Caco-2 (cell line): ENCODE measurements at regions of chr2 and their contacts with region 1.

Region 1: GRCh38 chr2:205216580-205216979 is 465.7 kb upstream of the NRP2 start:
- DNase-seq: peak; percentile 46 to 56
- H3K4me3 ChIP-seq: no peak overlapping the region
- H3K4me3 Mint-ChIP-seq: no peak overlapping the region
- H3K27ac Mint-ChIP-seq: peak overlapping the region; percentile 78
- H3K4me1 ChIP-seq: peaks cover 57% of the 10 kb centered on the region
- H3K4me1 Mint-ChIP-seq: peaks cover 46% of the 10 kb centered on the region
- H3K27me3 ChIP-seq: no peaks in the 10 kb centered on the region
- H3K27me3 Mint-ChIP-seq: no peaks in the 10 kb centered on the region
- CTCF ChIP-seq: no peak

Region 2: GRCh38 chr2:205276081-205276777 is 59.6 kb after region 1 on chr2:
- CTCF ChIA-PET with region 1: no interaction called
- POLR2A ChIA-PET with region 1: no interaction called
- intact Hi-C with region 1: no loop called
- DNase-seq: no peak
- H3K4me3 ChIP-seq: no peak overlapping the region
- H3K4me3 Mint-ChIP-seq: no peak overlapping the region
- H3K27ac Mint-ChIP-seq: no peak overlapping the region
- H3K4me1 ChIP-seq: peaks cover 18% of the 10 kb centered on the region
- H3K4me1 Mint-ChIP-seq: peaks cover 26% of the 10 kb centered on the region
- H3K27me3 ChIP-seq: no peaks in the 10 kb centered on the region
- H3K27me3 Mint-ChIP-seq: no peaks in the 10 kb centered on the region
- CTCF ChIP-seq: no peak

Region 3: DNA sequence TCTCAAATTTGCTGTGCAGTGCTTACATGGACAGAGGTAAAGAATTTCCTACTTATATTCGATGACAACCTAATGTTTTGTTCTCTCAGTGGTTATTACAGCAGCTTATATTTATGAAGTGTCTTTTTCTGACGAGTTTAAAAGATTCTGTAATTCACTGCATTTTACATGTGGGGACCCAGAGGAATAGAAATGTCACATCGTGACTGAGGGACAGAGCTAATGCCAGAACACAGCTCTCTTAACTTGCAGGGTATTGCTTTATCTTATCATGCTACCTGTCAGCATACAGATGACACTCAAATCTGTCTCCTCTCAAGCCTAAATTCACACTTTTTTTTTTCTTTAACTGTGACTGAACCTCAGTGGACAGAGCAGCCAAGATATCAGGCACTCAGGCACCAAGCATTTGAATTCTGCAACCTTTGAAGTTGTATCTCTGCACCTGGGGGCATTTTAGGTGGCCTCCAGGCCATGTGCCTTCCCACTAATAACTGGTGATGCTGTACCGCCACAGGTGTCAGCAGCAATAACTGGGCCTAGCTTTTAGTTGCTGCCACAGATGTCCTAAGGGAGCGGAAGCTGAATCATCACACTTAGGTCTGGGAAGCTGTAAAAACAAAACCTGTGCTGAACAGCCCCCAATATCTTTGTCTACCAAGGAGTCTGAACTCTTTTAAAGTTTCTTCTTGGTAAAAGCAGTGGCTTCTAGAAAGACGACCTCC is 149.9 kb after region 1 on chr2:
- CTCF ChIA-PET with region 1: no interaction called
- POLR2A ChIA-PET with region 1: no interaction called
- intact Hi-C with region 1: loop called (anchors 1 kb)
- DNase-seq: peak; percentile 63 to 82
- H3K4me3 ChIP-seq: no peak overlapping the region
- H3K4me3 Mint-ChIP-seq: peak overlapping the region; percentile 36
- H3K27ac Mint-ChIP-seq: peak overlapping the region; percentile 71
- H3K4me1 ChIP-seq: peaks cover 36% of the 10 kb centered on the region
- H3K4me1 Mint-ChIP-seq: peaks cover 52% of the 10 kb centered on the region
- H3K27me3 ChIP-seq: no peaks in the 10 kb centered on the region
- H3K27me3 Mint-ChIP-seq: no peaks in the 10 kb centered on the region
- CTCF ChIP-seq: no peak

Region 4: DNA sequence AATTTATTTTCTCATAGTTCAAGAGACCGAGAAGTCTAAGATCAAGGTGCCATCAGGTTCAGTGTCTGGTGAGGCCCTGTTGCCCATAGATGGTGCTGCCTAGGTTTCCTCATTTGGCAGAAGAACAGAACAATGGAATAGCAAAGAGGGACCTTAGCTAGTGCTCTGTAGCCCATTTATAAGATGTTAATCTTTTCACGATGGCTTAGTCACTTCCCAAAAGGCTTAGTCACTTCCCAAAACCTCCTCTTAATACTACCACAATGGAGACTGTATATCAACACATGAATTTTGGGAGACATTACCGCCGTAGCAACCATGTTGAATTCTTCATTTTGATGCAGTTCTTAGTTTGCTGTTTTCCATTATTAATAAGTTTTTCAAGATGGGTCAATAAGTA is 219.4 kb after region 1 on chr2:
- CTCF ChIA-PET with region 1: no interaction called
- POLR2A ChIA-PET with region 1: no interaction called
- intact Hi-C with region 1: no loop called
- DNase-seq: no peak
- H3K4me3 ChIP-seq: no peak overlapping the region
- H3K4me3 Mint-ChIP-seq: no peak overlapping the region
- H3K27ac Mint-ChIP-seq: no peak overlapping the region
- H3K4me1 ChIP-seq: no peaks in the 10 kb centered on the region
- H3K4me1 Mint-ChIP-seq: peaks cover 8% of the 10 kb centered on the region
- H3K27me3 ChIP-seq: no peaks in the 10 kb centered on the region
- H3K27me3 Mint-ChIP-seq: no peaks in the 10 kb centered on the region
- CTCF ChIP-seq: no peak